Activated naive CD4-positive, alpha-beta T cell treated with anti-CD3 and anti-CD28 coated beads, Interleukin-2, amount 10 ng/mL, durations not matched to agents 7 days and 5 days (primary cell): ENCODE measurements at regions of chr10 and their contacts with region 1.

Region 1: DNA sequence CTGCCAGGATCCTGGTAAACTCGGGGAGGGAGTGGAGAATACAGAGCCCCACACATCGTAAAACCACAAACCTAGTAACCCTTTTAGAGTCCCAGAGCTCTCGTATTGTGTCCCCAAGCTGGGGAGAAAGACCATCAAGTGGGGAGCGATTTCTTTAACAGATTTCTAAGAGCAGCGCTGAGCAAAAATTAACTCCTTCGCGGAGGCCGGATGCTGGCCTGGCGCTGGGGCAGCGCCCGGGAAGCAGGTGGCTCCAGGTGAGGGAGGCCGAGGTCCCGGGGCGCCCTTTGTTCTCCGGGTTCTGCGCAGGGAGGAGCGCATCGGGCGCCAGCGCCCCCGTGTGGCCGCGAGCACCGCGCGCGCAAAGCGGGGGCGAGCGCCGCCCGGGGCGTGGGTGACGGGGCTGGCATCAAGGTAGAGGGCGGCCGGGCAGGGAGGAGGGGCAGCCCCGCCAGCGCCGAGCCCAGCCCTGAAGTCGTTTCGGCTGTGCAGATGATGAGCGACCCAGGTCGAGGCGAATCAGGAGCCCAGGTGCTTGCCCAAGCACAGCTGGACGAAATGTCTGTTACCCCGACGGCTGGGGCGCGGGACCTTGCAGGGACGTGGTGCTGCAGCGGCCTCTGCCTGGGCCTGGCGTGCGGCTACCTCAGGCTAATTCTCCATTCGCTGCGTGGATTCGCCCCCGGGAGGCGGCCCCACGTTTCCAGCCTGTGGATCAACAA is 10.4 kb upstream of the FGFR2 start:
- DNase-seq: peak; percentile 46
- H3K4me3 Mint-ChIP-seq: no peak overlapping the region
- H3K27ac Mint-ChIP-seq: no peak overlapping the region
- H3K4me1 Mint-ChIP-seq: no peaks in the 10 kb centered on the region
- H3K27me3 Mint-ChIP-seq: peaks cover 26% of the 10 kb centered on the region

Region 2: DNA sequence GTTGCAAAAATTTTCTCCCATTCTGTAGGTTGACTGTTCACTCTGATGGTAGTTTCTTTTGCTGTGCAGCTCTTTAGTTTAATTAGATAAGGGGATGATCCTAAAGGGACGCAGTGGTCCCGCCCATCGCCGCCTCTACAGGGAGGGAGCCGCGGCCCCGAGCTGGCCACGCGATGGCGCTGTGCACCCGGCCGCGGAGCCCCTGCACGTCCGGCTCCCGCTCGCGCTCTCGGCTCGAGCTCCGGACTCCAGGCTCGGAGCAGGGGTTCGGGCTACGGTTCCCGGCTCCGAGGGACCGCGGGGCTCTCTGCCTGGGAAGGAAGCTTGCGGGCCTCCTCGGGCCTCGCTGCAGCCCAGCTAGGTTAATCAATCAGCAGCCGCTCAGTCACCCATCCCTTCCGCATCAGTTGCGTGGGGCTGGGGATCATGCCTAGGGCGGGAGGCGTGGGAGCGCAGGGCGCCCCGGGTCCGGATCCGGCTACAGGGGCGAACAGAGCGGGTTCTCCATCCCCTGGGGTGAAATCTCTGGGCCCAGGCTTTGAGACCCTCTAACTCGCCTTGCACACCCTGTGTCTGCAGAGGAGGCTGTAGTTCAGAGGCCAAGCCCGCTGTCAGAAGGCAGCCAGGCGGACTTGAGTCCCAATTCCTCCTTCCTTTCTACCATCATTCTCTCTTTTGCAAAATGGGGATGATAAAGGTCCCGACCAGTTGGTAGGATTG is 659.6 kb before region 1 on chr10:
- CTCF ChIA-PET with region 1: interaction called, 18 read pairs
- DNase-seq: peak; percentile 67
- H3K4me3 Mint-ChIP-seq: no peak overlapping the region
- H3K27ac Mint-ChIP-seq: no peak overlapping the region
- H3K4me1 Mint-ChIP-seq: peaks cover 4% of the 10 kb centered on the region
- H3K27me3 Mint-ChIP-seq: peaks cover 32% of the 10 kb centered on the region